Activated T-helper 1 cell treated with anti-CD3 and anti-CD28 coated beads, Interleukin-12 subunit alpha, Interleukin-12 subunit beta, Interleukin-2, Interleukin-4 antibody, amounts not matched to agents 30 ng/mL and 10 ng/mL and 1 ng/mL, durations not matched to agents 14 hours and 24 hours and 36 hours (primary cell): ENCODE measurements at regions of chr16 and their contacts with region 1.

Region 1: DNA sequence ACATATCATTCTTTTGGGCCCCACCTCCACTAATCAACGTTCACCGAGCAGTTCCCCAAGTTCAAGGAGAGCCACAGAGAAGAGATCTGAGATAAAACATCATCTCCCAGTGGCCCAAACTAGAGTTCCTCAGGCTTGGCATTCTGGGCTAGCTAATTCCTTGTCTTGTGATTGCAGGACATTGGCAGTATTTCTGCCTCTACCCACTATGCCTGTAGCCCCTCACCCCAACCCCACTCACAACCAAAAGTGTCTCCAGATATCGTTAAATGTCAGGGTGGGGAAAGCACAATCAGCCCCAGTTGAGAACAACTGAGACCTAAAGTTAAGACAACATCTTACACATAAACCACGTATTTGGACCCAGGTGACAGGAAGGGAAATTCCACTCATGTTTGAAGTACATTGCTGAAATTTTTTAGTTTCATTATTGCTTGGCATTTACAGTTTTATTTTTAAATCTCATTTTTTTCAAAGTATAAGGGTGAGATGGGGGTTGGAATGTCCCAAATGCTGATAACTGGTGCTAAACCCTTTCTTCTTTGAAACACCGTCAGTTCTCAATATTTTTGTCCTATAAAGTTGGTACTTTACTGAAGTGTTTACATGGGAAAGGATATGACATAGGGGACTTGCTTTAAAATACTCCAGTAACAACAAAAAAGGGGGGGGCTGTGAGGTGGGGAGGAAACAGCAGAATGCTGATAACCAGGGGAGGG is 13.6 kb downstream of the ZC3H7A start:
- DNase-seq: peak; percentile 67
- H3K4me3 Mint-ChIP-seq: peak overlapping the region; percentile 83
- H3K27ac Mint-ChIP-seq: peak overlapping the region; percentile 98
- H3K4me1 Mint-ChIP-seq: peaks cover 64% of the 10 kb centered on the region
- H3K27me3 Mint-ChIP-seq: no peaks in the 10 kb centered on the region

Region 2: GRCh38 chr16:10876799-10877341 is 906.6 kb before region 1 on chr16 and contains the start of gene CIITA:
- intact Hi-C with region 1: loop called (anchors 10 kb)
- DNase-seq: peak; percentile 53
- H3K4me3 Mint-ChIP-seq: peak within 1 kb of the TSS; percentile 86
- H3K27ac Mint-ChIP-seq: peak within 1 kb of the TSS; percentile 59
- H3K4me1 Mint-ChIP-seq: peaks cover 88% of the 10 kb centered on the region
- H3K27me3 Mint-ChIP-seq: peaks cover 14% of the 10 kb centered on the region
- total RNA-seq, gene CIITA: 12.0 and 13.0 TPM in 2 replicates

Region 3: DNA sequence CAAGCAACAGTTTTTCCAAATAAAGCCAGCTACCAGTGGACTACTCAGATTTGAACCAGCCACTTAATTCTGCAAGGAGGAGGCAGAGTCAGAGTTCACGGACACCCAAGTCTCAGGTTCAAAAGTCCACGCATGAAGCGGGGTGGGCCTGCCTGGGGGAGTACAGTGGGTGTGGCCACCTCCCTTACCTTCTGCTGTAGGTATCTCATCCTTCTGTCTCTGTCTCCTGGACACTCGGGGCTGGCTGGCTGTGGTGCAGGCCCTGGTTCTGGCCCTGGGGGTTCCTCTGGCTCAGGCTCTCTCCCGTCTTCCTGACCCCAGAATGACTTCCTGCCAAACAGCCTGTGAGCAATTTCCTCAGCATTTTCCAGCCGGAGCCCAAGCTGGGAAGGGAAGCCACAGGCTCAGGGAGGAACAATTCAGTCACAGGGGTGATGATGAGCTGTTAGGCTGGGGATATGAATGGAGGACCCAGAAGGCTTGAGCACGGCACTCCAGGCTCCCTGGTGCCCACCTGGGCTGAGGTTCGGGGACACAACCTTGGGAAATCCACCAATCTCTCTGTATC is 298.7 kb before region 1 on chr16:
- intact Hi-C with region 1: no loop called
- DNase-seq: no peak
- H3K4me3 Mint-ChIP-seq: no peak overlapping the region
- H3K27ac Mint-ChIP-seq: no peak overlapping the region
- H3K4me1 Mint-ChIP-seq: no peaks in the 10 kb centered on the region
- H3K27me3 Mint-ChIP-seq: peaks cover 1% of the 10 kb centered on the region

Region 4: GRCh38 chr16:11742539-11743307 is 40.8 kb before region 1 on chr16 and contains the start of gene TXNDC11:
- intact Hi-C with region 1: loop called (anchors 1 kb)
- DNase-seq: peak; percentile 99
- H3K4me3 Mint-ChIP-seq: peak within 1 kb of the TSS; percentile 99
- H3K27ac Mint-ChIP-seq: peak within 1 kb of the TSS; percentile 93
- H3K4me1 Mint-ChIP-seq: peaks cover 54% of the 10 kb centered on the region
- H3K27me3 Mint-ChIP-seq: no peaks in the 10 kb centered on the region
- total RNA-seq, gene TXNDC11: 52.7 and 55.9 TPM in 2 replicates

Region 5: GRCh38 chr16:11797166-11797956 is 13.9 kb after region 1 on chr16 and contains the start of gene ZC3H7A:
- intact Hi-C with region 1: loop called (anchors 1 kb)
- DNase-seq: peak; percentile 95
- H3K4me3 Mint-ChIP-seq: peak within 1 kb of the TSS; percentile 92
- H3K27ac Mint-ChIP-seq: peak within 1 kb of the TSS; percentile 94
- H3K4me1 Mint-ChIP-seq: peaks cover 75% of the 10 kb centered on the region
- H3K27me3 Mint-ChIP-seq: no peaks in the 10 kb centered on the region
- total RNA-seq, gene ZC3H7A: 71.0 and 78.9 TPM in 2 replicates

Region 6: GRCh38 chr16:11851294-11852091 is 68.0 kb after region 1 on chr16 and contains the start of gene RSL1D1:
- intact Hi-C with region 1: loop called (anchors 1 kb)
- DNase-seq: peak; percentile 95
- H3K4me3 Mint-ChIP-seq: peak within 1 kb of the TSS; percentile 99
- H3K27ac Mint-ChIP-seq: peak within 1 kb of the TSS; percentile 97
- H3K4me1 Mint-ChIP-seq: peaks cover 44% of the 10 kb centered on the region
- H3K27me3 Mint-ChIP-seq: no peaks in the 10 kb centered on the region
- total RNA-seq, gene RSL1D1: 345 and 369 TPM in 2 replicates

Region 7: GRCh38 chr16:11862489-11862888 is 79.0 kb after region 1 on chr16:
- intact Hi-C with region 1: no loop called
- DNase-seq: no peak
- H3K4me3 Mint-ChIP-seq: no peak overlapping the region
- H3K27ac Mint-ChIP-seq: no peak overlapping the region
- H3K4me1 Mint-ChIP-seq: peaks cover 14% of the 10 kb centered on the region
- H3K27me3 Mint-ChIP-seq: no peaks in the 10 kb centered on the region